Vagina (tissue), 2 donors: ENCODE measurements at regions of chr9 and their contacts with region 1.

Region 1: DNA sequence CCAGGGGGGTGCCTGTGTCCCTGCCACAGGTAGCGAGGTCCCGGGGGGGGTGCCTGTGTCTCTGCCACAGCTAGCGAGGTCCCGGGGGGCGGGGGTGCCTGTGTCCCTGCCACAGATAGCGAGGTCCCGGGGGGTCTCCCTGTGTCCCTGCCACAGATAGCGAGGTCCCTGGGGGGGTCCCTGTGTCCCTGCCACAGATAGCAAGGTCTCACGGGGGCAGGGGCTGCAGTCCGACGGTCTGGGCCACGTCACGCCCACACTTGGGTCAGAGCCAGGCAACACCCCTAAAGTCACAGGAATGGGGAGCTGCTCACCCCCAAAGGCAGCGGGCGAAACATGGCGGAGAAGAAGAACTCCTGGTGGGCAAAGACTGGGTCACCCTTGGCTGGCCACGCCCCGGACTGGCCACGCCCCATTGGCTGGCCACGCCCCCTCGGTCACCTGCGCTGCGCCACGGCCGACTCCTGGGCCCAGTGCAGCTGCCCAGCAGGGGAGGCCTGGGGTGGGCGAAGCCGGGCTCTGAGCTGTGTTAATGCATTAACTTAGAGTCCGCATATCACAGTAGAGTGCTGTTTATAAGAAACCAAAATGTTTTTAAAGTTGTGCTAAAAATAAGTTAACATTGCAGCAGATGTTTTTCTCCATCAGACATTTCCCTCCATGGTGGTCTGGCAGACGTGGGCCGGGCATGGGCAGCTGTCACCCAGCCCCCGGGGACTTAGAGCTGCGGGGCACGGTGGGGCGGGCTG is 7.0 kb downstream of the NOXA1 start:
- DNase-seq: no peak
- H3K4me3 ChIP-seq: no peak overlapping the region
- H3K27ac ChIP-seq: no peak overlapping the region
- H3K4me1 ChIP-seq: peaks cover 4% of the 10 kb centered on the region
- H3K27me3 ChIP-seq: no peaks in the 10 kb centered on the region
- CTCF ChIP-seq: no peak
- POLR2A ChIP-seq: no peak

Region 2: GRCh38 chr9:137446851-137447471 is 16.8 kb after region 1 on chr9:
- intact Hi-C with region 1: loop called (anchors 1 kb)
- DNase-seq: no peak
- H3K4me3 ChIP-seq: no peak overlapping the region
- H3K27ac ChIP-seq: no peak overlapping the region
- H3K4me1 ChIP-seq: peaks cover 12% of the 10 kb centered on the region
- H3K27me3 ChIP-seq: no peaks in the 10 kb centered on the region
- CTCF ChIP-seq: no peak
- POLR2A ChIP-seq: no peak

Region 3: DNA sequence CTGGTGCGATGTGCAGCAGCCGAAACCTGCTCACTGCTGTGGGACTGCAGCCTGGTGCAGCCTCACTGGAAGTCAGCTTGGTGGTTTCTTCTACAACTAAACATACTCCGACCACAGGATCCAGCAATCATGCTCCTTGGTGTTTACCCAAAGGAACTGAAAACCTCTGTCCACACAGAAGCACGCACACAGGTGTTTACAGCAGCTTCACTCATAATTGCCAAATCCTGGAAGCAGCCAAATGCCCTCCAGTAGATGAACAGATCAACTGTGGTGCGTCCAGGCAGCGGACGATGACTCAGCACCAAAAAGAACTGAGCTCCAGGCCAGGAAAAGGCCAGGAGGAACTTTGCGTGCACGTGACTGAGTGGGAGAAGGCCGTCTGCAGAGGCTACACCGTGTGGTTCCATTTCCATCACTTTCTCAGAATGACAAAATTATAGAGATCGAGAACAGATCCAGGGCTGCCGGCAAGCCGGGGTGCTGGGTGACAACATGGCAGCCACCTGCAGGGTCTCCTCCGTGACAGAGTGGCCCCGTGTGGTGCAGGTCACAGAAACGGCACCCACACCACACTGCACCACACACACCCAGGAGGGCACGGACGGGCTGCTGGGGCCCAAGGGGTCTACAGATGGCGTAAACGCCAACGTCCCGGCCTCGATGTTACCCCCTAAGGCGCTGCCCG is 52.1 kb after region 1 on chr9:
- intact Hi-C with region 1: no loop called
- DNase-seq: no peak
- H3K4me3 ChIP-seq: no peak overlapping the region
- H3K27ac ChIP-seq: no peak overlapping the region
- H3K4me1 ChIP-seq: peaks cover 10% of the 10 kb centered on the region
- H3K27me3 ChIP-seq: no peaks in the 10 kb centered on the region
- CTCF ChIP-seq: no peak
- POLR2A ChIP-seq: no peak